CD8-positive, alpha-beta T cell (primary cell): ENCODE measurements at regions of chr6 and their contacts with region 1.

Region 1: DNA sequence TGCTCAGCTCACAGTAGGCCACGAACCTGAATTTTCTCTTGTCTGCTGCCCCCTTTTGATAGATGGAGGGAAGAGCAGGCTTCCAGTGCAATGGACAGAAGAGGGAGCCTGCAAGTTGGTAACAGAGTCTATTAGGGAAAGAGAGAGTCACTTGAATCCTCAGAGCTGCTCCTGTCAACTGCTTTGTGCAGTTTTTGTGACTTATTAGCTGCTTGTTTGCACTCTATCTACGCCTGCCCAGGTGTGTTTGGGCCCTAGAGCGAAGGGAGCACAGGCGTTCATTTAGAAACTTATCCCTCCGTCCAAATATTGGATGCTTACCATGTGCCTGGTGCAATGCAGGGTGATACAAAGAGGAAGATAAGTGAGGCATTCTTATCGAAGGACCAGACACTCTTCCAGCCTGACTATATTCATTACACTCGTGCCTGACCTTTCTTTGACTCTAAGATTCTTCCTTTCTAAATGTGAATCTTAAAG is 11.6 kb upstream of the SLC2A12 start:
- DNase-seq: peak; percentile 6 to 75 (median 50)
- ATAC-seq: peak; percentile 98
- H3K4me3 ChIP-seq: no peak overlapping the region
- H3K4me3 Mint-ChIP-seq: no peak overlapping the region
- H3K27ac ChIP-seq: no peak overlapping the region
- H3K27ac Mint-ChIP-seq: no peak overlapping the region
- H3K4me1 ChIP-seq: no peaks in the 10 kb centered on the region
- H3K4me1 Mint-ChIP-seq: peaks cover 2% of the 10 kb centered on the region
- H3K27me3 ChIP-seq: no peaks in the 10 kb centered on the region
- H3K27me3 Mint-ChIP-seq: no peaks in the 10 kb centered on the region
- CTCF ChIP-seq: peak; percentile 75

Region 2: DNA sequence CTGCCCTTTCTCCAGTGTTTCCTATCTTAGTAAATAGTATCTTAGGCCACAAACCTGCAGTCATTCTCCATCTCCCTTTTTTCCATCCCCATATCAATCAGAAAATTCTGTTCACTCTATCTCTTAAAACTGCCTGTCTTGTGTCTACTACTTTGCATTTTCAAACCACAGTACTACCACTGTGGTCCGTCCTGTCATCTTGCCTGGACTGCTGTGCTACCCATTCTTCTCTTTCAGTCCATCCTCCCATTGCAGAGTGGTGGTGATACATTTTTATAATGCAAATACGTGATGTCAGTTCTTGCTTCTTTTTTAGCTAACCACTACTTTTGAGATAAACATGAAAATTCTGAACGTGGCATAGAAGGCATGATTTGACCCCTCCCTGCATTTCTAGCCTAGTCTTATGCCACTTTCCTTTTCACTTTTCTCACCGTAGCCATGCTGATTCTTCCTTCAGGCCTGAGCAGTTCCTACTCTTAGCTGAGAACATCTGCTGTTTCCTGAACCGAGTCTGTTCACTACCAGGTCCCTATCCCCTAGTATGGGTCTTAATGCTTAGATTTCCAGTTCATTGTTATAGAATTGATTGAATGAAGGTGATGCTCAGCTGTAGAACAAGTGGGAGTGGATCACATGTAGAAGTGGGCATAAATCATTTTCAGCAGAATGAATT is 97.2 kb before region 1 on chr6:
- CTCF ChIA-PET with region 1: interaction called, 17 read pairs
- POLR2A ChIA-PET with region 1: no interaction called
- intact Hi-C with region 1: no loop called
- DNase-seq: no peak
- ATAC-seq: no peak
- H3K4me3 ChIP-seq: no peak overlapping the region
- H3K4me3 Mint-ChIP-seq: no peak overlapping the region
- H3K27ac ChIP-seq: peak overlapping the region in 1 of 2 experiments; percentile 18
- H3K27ac Mint-ChIP-seq: peak overlapping the region; percentile 66
- H3K4me1 ChIP-seq: peaks cover 18% of the 10 kb centered on the region
- H3K4me1 Mint-ChIP-seq: peaks cover 73% of the 10 kb centered on the region
- H3K27me3 ChIP-seq: no peaks in the 10 kb centered on the region
- H3K27me3 Mint-ChIP-seq: no peaks in the 10 kb centered on the region
- CTCF ChIP-seq: no peak

Region 3: DNA sequence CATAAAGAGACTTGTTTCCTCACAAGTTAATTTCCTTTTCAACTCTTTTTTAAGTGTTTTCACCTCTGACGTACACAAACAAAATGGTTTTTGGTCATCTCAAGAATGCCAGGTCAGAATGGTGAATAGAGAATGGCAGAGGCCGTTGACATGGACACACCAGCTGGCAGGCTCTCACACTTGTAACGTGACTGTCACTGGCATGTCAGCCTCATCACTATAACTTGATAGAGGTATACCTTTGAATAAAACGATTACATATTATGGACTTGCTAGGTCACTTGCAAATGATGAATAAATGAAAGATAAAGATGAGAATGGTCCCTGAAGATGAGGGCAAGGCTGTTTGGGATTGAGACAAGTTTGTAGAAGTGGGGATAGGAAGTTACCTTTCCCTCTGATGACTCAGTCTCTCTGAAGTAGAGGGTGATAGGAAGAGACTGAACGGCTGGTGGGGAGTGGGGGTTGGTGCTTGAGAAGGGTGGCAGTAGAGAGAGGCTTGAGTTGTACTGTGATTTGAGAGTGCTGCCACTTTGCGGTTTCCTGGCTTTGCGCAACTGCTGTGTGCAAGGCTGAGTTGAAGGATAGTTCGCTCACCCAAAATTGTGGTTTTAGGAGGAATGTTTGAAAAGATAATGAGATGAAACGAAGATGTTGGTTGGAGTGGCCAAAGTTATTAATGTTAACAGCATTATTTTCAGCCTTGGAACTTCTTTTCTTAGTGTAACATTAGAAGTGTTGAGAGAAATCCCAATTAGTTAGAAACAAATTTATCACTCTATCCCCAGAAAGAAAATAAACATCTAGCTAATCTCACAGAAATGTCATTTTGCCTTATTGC is 80.7 kb before region 1 on chr6:
- CTCF ChIA-PET with region 1: interaction called, 13 read pairs
- POLR2A ChIA-PET with region 1: no interaction called
- intact Hi-C with region 1: no loop called
- DNase-seq: peak in 8 of 9 experiments; percentile 35 to 73 (median 61)
- ATAC-seq: peak; percentile 91
- H3K4me3 ChIP-seq: no peak overlapping the region
- H3K4me3 Mint-ChIP-seq: peak overlapping the region; percentile 23
- H3K27ac ChIP-seq: no peak overlapping the region
- H3K27ac Mint-ChIP-seq: peak overlapping the region; percentile 55
- H3K4me1 ChIP-seq: peaks cover 24% of the 10 kb centered on the region
- H3K4me1 Mint-ChIP-seq: peaks cover 47% of the 10 kb centered on the region
- H3K27me3 ChIP-seq: no peaks in the 10 kb centered on the region
- H3K27me3 Mint-ChIP-seq: no peaks in the 10 kb centered on the region
- CTCF ChIP-seq: no peak

Region 4: DNA sequence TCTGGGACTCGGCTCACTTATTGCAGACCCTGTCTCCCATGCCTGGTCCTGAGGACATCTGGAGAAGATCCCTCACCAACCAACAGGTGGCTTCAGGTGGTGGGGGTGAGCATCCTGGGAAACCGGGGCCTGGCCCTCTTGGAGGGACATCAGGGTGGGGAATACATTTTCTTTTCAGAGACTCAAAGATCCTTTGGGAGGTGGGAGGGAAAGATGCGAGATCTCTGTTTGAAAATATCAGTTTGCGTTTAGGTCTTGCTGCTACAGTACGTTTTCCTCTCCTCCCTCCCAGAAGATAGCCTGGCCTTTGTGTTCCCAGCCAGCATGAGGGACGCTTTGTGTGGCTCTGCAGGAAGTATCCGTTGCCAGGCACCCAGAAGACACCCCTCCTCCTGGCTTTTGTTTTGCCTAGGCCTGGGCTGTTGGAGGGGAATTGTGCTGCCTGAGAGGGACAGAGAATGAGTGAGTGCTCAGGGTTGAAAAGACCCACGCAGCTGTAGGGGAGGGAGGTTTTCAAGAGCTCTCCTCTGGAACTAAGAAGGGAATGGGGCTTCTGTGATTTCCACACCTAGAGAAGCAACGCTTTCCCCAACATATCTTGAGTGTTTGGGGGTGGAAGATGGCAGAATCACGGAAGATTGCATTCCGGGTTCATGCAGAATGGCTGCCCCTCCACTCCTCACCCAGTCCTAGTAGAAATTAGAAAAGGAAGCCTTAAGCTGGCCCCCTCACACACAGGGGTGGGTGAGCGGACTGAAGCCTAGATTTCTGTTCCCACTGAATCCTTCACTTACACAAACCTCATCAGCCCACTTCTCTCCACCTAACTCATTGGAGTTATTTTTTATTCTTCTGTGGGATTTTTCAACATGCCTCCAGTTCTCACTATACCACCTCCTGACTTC is 10.4 kb after region 1 on chr6:
- CTCF ChIA-PET with region 1: interaction called, 17 read pairs
- POLR2A ChIA-PET with region 1: no interaction called
- intact Hi-C with region 1: no loop called
- DNase-seq: no peak
- ATAC-seq: no peak
- H3K4me3 ChIP-seq: no peak overlapping the region
- H3K4me3 Mint-ChIP-seq: no peak overlapping the region
- H3K27ac ChIP-seq: no peak overlapping the region
- H3K27ac Mint-ChIP-seq: no peak overlapping the region
- H3K4me1 ChIP-seq: no peaks in the 10 kb centered on the region
- H3K4me1 Mint-ChIP-seq: peaks cover under 1% of the 10 kb centered on the region
- H3K27me3 ChIP-seq: no peaks in the 10 kb centered on the region
- H3K27me3 Mint-ChIP-seq: peaks cover 2% of the 10 kb centered on the region
- CTCF ChIP-seq: no peak